ENCODE measurements at regions of chr7 and their contacts with region 1.

Region 1: GRCh38 chr7:66844552-66845378 is 76.3 kb upstream of the TMEM248 start:
- DNase-seq: peak; percentile 99
- H3K4me3 ChIP-seq: peak overlapping the region; percentile 56 to 87 (median 72)
- H3K27ac ChIP-seq: peak overlapping the region; percentile 93 to 98 (median 94)
- H3K4me1 ChIP-seq: peaks cover 0 to 21% (median 18%) of the 10 kb centered on the region in 4 donors
- H3K27me3 ChIP-seq: no peaks in the 10 kb centered on the region
- CTCF ChIP-seq: peak; percentile 27 to 87 (median 43)
- EP300 ChIP-seq: peak; percentile 20
- POLR2A ChIP-seq: peak; percentile 94

Region 2: GRCh38 chr7:65269150-65269856 is 1575.5 kb before region 1 on chr7:
- in situ Hi-C with region 1: no loop called
- intact Hi-C with region 1: no loop called
- DNase-seq: no peak
- H3K4me3 ChIP-seq: peak overlapping the region in 2 of 4 donors; percentile 32
- H3K27ac ChIP-seq: no peak overlapping the region
- H3K4me1 ChIP-seq: peaks cover 0 to 11% (median 3%) of the 10 kb centered on the region in 4 donors
- H3K27me3 ChIP-seq: peaks cover 54% of the 10 kb centered on the region
- CTCF ChIP-seq: no peak
- EP300 ChIP-seq: no peak
- POLR2A ChIP-seq: no peak

Region 3: DNA sequence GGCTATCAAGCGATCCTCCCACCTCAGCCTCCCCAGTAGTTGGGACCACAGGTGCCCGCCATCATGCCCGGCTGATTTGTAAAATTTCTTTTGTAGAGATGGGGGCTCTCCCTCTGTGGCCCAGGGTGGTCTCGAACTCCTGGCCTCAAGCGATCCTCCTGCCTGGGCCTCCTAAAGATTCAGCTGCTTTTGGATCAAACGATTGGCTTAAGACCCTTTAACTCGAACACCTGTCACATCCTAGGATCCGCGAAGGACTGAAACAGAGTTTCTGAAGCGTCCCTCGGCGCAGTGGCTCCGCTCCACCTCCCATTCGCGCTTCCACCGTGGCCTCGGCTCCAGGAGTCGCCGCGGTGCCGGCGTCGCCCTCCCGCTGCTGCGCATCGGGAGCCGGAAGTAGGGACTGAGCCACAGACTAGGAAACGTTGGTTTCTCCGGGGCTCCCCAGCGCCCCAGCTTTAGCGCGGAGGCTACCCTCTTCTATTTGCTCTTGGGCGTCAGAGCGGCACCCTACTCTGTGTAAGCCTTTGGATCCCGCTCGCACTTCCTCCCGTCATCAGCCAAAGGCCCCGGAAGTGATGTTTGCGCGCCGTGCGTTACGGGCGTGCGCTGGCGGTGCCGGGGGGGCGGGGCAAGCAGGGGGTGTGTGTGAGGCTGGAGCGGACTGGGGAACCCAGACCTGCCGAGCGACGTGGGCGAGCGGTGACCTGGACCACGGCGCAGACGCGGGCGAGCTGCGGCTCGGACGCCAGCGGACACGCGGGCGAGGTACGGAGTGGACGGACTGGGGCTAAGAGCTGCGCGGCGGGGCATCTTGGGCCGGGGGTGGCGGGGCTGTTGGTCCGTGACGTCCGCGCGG is 163.0 kb before region 1 on chr7:
- in situ Hi-C with region 1: loop called in 1 of 4 experiments (anchors 25 kb)
- intact Hi-C with region 1: no loop called
- DNase-seq: peak; percentile 99
- H3K4me3 ChIP-seq: peak overlapping the region; percentile 70 to 83 (median 82)
- H3K27ac ChIP-seq: peak overlapping the region; percentile 97 to 100 (median 98)
- H3K4me1 ChIP-seq: peaks cover 6 to 31% (median 18%) of the 10 kb centered on the region in 4 donors
- H3K27me3 ChIP-seq: no peaks in the 10 kb centered on the region
- CTCF ChIP-seq: no peak
- EP300 ChIP-seq: no peak
- POLR2A ChIP-seq: peak; percentile 97

Region 4: GRCh38 chr7:66952343-66953043 is 107.7 kb after region 1 on chr7:
- in situ Hi-C with region 1: no loop called
- intact Hi-C with region 1: no loop called
- DNase-seq: peak; percentile 26
- H3K4me3 ChIP-seq: no peak overlapping the region
- H3K27ac ChIP-seq: peak overlapping the region in 2 of 4 donors; percentile 11 to 56
- H3K4me1 ChIP-seq: peaks cover 0 to 4% (median 1%) of the 10 kb centered on the region in 4 donors
- H3K27me3 ChIP-seq: no peaks in the 10 kb centered on the region
- CTCF ChIP-seq: no peak
- EP300 ChIP-seq: no peak
- POLR2A ChIP-seq: no peak